Naive thymus-derived CD4-positive, alpha-beta T cell (primary cell): ENCODE measurements at regions of chr13 and their contacts with region 1.

Region 1: GRCh38 chr13:20902438-20903163 is at the start of gene XPO4:
- DNase-seq: peak; percentile 68 to 85 (median 77)
- ATAC-seq: peak; percentile 97
- H3K4me3 ChIP-seq: peak within 1 kb of the TSS; percentile 98
- H3K4me3 Mint-ChIP-seq: peak within 1 kb of the TSS; percentile 93 to 98 (median 96)
- H3K27ac ChIP-seq: peak within 1 kb of the TSS; percentile 83
- H3K27ac Mint-ChIP-seq: peak within 1 kb of the TSS; percentile 89 to 98 (median 95)
- H3K4me1 ChIP-seq: peaks cover 10 to 21% of the 10 kb centered on the region in 2 donors
- H3K4me1 Mint-ChIP-seq: peaks cover 15 to 41% (median 32%) of the 10 kb centered on the region in 7 donors
- H3K27me3 ChIP-seq: no peaks in the 10 kb centered on the region
- H3K27me3 Mint-ChIP-seq: peaks cover 0 to 3% (median 0%) of the 10 kb centered on the region in 5 donors
- total RNA-seq, gene XPO4: 20.9 to 26.5 (median 23.5) TPM

Region 2: DNA sequence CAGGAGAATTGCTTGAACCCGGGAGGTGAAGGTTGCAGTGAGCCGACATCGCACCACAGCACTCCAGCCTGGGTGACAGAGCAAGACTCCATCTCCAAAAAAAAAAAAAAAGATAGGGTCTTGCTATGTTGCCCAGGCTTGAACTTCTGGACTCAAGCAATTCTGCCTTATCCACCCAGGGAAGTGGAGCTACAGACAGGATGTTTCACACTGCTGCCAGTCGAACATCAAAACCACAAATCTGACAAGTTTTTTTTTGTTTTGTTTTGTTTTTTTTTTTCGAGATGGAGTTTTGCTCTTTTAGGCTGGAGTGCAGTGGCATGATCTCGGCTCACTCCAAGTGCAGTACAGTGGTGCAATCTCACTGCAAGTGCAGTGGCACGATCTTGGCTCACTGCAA is 10.8 kb before region 1 on chr13:
- CTCF ChIA-PET with region 1: interaction called, 4 read pairs
- POLR2A ChIA-PET with region 1: interaction called, 16 read pairs
- intact Hi-C with region 1: no loop called
- DNase-seq: peak in 6 of 9 donors; percentile 23 to 47 (median 38)
- ATAC-seq: peak; percentile 73
- H3K4me3 ChIP-seq: no peak overlapping the region
- H3K4me3 Mint-ChIP-seq: peak overlapping the region in 2 of 10 donors; percentile 29 to 57
- H3K27ac ChIP-seq: no peak overlapping the region
- H3K27ac Mint-ChIP-seq: peak overlapping the region in 4 of 9 donors; percentile 22 to 65 (median 36)
- H3K4me1 ChIP-seq: peaks cover 0 to 11% of the 10 kb centered on the region in 2 donors
- H3K4me1 Mint-ChIP-seq: peaks cover 24 to 64% (median 45%) of the 10 kb centered on the region in 7 donors
- H3K27me3 ChIP-seq: no peaks in the 10 kb centered on the region
- H3K27me3 Mint-ChIP-seq: no peaks in the 10 kb centered on the region